Right cardiac atrium (tissue), 5 donors: ENCODE measurements at regions of chr10 and their contacts with region 1.

Region 1: DNA sequence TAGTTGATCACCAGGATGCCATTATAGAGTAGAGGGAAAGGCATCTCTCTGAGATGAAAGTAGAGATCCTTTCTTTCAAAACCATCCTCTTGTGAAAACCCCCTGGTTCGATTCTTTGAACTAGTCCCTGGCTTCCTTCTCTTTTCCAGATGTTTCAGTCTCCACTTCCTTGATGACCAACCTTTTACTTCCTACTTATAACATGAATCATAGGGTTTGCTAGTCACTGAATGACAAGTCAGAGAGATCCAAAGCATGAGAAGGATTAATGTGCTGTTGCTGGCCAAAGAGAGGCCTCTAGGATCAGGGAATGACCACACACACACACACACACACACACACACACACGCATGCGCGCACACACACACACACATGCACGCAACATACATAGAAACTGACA is 161.1 kb upstream of the FRMD4A start:
- DNase-seq: no peak
- ATAC-seq: no peak
- H3K4me3 ChIP-seq: no peak overlapping the region
- H3K27ac ChIP-seq: no peak overlapping the region
- H3K4me1 ChIP-seq: no peaks in the 10 kb centered on the region
- H3K27me3 ChIP-seq: peaks cover 3% of the 10 kb centered on the region

Region 2: DNA sequence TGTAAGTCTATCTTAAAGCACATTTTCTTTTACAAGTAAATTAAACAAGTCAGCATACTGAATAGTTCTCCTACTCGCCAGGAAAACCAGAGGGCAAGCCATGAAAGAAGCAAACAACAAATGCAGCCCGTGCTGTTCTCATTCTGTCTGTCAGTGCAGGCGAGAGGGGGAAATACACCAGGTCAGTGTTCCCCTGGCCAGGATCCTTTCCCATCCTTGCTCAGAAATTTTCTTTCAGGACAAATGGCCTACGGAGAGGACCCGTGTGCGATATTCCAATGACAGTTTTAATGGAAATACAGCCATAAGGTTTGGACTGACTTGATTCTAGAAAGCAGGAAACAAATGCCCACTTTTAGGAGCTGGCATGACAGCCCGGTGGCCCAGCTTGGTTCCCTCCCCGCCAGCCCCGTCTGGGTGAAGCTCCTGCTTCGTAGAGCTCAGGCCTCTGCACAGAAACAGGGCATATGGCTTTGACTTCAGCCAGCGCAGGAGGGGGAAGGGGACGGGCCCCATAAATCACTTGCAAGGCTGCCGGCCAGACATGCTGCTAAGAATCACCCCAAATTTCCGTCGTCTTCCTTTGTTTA is 228.9 kb before region 1 on chr10:
- intact Hi-C with region 1: no loop called
- DNase-seq: no peak
- ATAC-seq: no peak
- H3K4me3 ChIP-seq: no peak overlapping the region
- H3K27ac ChIP-seq: no peak overlapping the region
- H3K4me1 ChIP-seq: no peaks in the 10 kb centered on the region
- H3K27me3 ChIP-seq: no peaks in the 10 kb centered on the region

Region 3: GRCh38 chr10:14371581-14371980 is 120.2 kb before region 1 on chr10:
- intact Hi-C with region 1: no loop called
- DNase-seq: no peak
- ATAC-seq: no peak
- H3K4me3 ChIP-seq: no peak overlapping the region
- H3K27ac ChIP-seq: no peak overlapping the region
- H3K4me1 ChIP-seq: no peaks in the 10 kb centered on the region
- H3K27me3 ChIP-seq: no peaks in the 10 kb centered on the region

Region 4: DNA sequence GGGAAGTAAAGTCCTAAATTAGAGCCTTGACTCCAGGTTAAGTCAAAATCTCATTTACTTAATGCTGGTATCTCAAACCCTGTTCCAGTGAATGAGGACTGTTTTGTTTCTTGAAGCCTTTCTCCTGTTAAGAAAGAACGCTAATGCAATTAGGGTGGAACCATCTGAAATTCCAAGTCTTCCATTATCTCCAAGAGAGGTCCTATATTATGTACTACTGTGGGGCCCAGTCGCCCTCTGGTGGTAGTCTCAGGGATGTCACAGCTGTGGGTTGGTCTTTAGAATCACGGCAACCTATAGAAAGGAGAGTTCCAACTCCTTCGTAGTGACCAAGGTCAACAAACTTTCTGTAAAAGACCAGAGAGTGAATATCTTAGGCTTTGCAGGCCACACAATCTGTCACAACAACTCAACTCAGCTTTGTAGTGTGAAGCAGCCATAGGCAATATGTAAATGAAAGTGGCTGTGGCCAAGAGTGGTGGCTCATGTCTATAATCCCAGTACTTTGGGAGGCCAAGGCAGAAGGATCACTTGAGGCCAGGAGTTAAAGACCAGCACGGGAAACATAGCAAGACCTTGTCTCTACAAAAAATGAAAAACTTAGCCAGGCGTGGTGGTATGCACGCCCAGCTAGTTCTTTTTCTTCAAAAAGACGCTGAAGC is 614.7 kb after region 1 on chr10:
- intact Hi-C with region 1: loop called in 1 of 4 experiments (anchors 10 kb)
- DNase-seq: peak in 2 of 3 donors; percentile 63 to 83
- ATAC-seq: peak; percentile 87 to 91
- H3K4me3 ChIP-seq: no peak overlapping the region
- H3K27ac ChIP-seq: no peak overlapping the region
- H3K4me1 ChIP-seq: no peaks in the 10 kb centered on the region
- H3K27me3 ChIP-seq: no peaks in the 10 kb centered on the region